Endothelial cell of umbilical vein (primary cell): ENCODE measurements at regions of chr12 and their contacts with region 1.

Region 1: GRCh38 chr12:45728630-45729232 is 775 bp upstream of the ARID2 start:
- DNase-seq: peak; percentile 97
- H3K4me3 ChIP-seq: peak overlapping the region; percentile 28 to 71 (median 60)
- H3K27ac ChIP-seq: peak overlapping the region; percentile 87
- H3K4me1 ChIP-seq: peaks cover 32% of the 10 kb centered on the region
- H3K27me3 ChIP-seq: no peaks in the 10 kb centered on the region
- CTCF ChIP-seq: peak; percentile 93 to 96
- POLR2A ChIP-seq: peak; percentile 84

Region 2: GRCh38 chr12:45130881-45131281 is 597.9 kb before region 1 on chr12:
- CTCF ChIA-PET with region 1: no interaction called
- POLR2A ChIA-PET with region 1: no interaction called
- dilution Hi-C with region 1: no loop called
- intact Hi-C with region 1: loop called (anchors 1 kb)
- DNase-seq: peak; percentile 71
- H3K4me3 ChIP-seq: no peak overlapping the region
- H3K27ac ChIP-seq: no peak overlapping the region
- H3K4me1 ChIP-seq: no peaks in the 10 kb centered on the region
- H3K27me3 ChIP-seq: peaks cover 5 to 22% of the 10 kb centered on the region in 2 experiments
- CTCF ChIP-seq: peak; percentile 52 to 61
- POLR2A ChIP-seq: no peak

Region 3: GRCh38 chr12:45215419-45216229 is 513.1 kb before region 1 on chr12 and contains the start of gene ANO6:
- CTCF ChIA-PET with region 1: interaction called, 3 read pairs
- POLR2A ChIA-PET with region 1: interaction called, 4 read pairs
- dilution Hi-C with region 1: no loop called
- intact Hi-C with region 1: loop called (anchors 1 kb)
- DNase-seq: peak; percentile 93
- H3K4me3 ChIP-seq: peak within 1 kb of the TSS; percentile 53 to 88 (median 86)
- H3K27ac ChIP-seq: peak within 1 kb of the TSS; percentile 76
- H3K4me1 ChIP-seq: peaks cover 14% of the 10 kb centered on the region
- H3K27me3 ChIP-seq: no peaks in the 10 kb centered on the region
- CTCF ChIP-seq: peak in 1 of 2 donors; percentile 38
- POLR2A ChIP-seq: peak; percentile 61
- total RNA-seq, gene ANO6: 67.6 and 70.1 TPM in 2 replicates

Region 4: DNA sequence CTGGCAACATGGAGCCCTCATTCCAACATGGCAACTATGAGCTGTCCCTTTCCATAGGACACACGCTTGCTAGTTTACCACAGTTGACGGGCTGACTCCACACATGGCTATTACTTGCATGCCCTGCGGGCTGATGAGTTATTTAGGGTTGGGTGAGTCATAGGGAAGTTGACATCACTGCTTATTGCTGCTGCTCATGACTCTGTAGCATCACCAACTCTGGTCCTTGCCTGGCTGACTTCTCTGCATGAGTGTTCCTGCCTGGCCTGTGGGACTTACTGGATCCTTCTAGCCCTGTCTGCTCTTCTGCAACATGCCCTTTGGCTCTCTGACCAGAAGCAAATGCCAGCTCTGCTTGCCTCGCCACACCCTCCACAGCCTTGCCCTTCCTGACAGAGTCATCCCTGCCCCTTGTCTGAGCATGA is 313.3 kb before region 1 on chr12:
- CTCF ChIA-PET with region 1: no interaction called
- POLR2A ChIA-PET with region 1: no interaction called
- dilution Hi-C with region 1: no loop called
- intact Hi-C with region 1: loop called (anchors 2 kb)
- DNase-seq: peak; percentile 76
- H3K4me3 ChIP-seq: no peak overlapping the region
- H3K27ac ChIP-seq: no peak overlapping the region
- H3K4me1 ChIP-seq: peaks cover 3% of the 10 kb centered on the region
- H3K27me3 ChIP-seq: no peaks in the 10 kb centered on the region
- CTCF ChIP-seq: no peak
- POLR2A ChIP-seq: no peak

Region 5: GRCh38 chr12:45637706-45638105 is 91.0 kb before region 1 on chr12:
- CTCF ChIA-PET with region 1: interaction called, 3 read pairs
- POLR2A ChIA-PET with region 1: no interaction called
- dilution Hi-C with region 1: no loop called
- intact Hi-C with region 1: loop called (anchors 1 kb)
- DNase-seq: peak; percentile 74
- H3K4me3 ChIP-seq: no peak overlapping the region
- H3K27ac ChIP-seq: peak overlapping the region; percentile 50
- H3K4me1 ChIP-seq: peaks cover 17% of the 10 kb centered on the region
- H3K27me3 ChIP-seq: peaks cover 0 to 2% of the 10 kb centered on the region in 2 experiments
- CTCF ChIP-seq: no peak
- POLR2A ChIP-seq: no peak

Region 6: GRCh38 chr12:45990468-45991283 is 261.9 kb after region 1 on chr12 and contains the start of gene SCAF11:
- CTCF ChIA-PET with region 1: interaction called, 8 read pairs
- POLR2A ChIA-PET with region 1: no interaction called
- dilution Hi-C with region 1: no loop called
- intact Hi-C with region 1: loop called (anchors 1 kb)
- DNase-seq: peak; percentile 100
- H3K4me3 ChIP-seq: peak within 1 kb of the TSS; percentile 56 to 91 (median 86)
- H3K27ac ChIP-seq: peak within 1 kb of the TSS; percentile 79
- H3K4me1 ChIP-seq: peaks cover 16% of the 10 kb centered on the region
- H3K27me3 ChIP-seq: no peaks in the 10 kb centered on the region
- CTCF ChIP-seq: peak; percentile 96 to 99
- POLR2A ChIP-seq: peak; percentile 16
- total RNA-seq, gene SCAF11: 95.0 and 109 TPM in 2 replicates